Activated CD4-positive, alpha-beta T cell treated with anti-CD3 and anti-CD28 coated beads for 36 hours (primary cell): ENCODE measurements at regions of chr19 and their contacts with region 1.

Region 1: GRCh38 chr19:10653715-10654492 is at the start of gene ILF3:
- DNase-seq: peak; percentile 100
- ATAC-seq: peak; percentile 82
- H3K4me3 Mint-ChIP-seq: peak within 1 kb of the TSS; percentile 86
- H3K27ac Mint-ChIP-seq: peak within 1 kb of the TSS; percentile 97
- H3K4me1 Mint-ChIP-seq: peaks cover 34% of the 10 kb centered on the region
- H3K27me3 Mint-ChIP-seq: no peaks in the 10 kb centered on the region
- total RNA-seq, gene ILF3: 433 to 570 TPM

Region 2: GRCh38 chr19:10194500-10195289 is 459.2 kb before region 1 on chr19 and contains the start of gene DNMT1:
- CTCF ChIA-PET with region 1: no interaction called
- POLR2A ChIA-PET with region 1: interaction called, 3 read pairs
- intact Hi-C with region 1: loop called in 1 of 2 experiments (anchors 1 kb)
- DNase-seq: peak; percentile 99
- ATAC-seq: peak; percentile 94
- H3K4me3 Mint-ChIP-seq: peak within 1 kb of the TSS; percentile 89
- H3K27ac Mint-ChIP-seq: peak within 1 kb of the TSS; percentile 97
- H3K4me1 Mint-ChIP-seq: peaks cover 49% of the 10 kb centered on the region
- H3K27me3 Mint-ChIP-seq: no peaks in the 10 kb centered on the region
- total RNA-seq, gene DNMT1: 374 to 385 TPM

Region 3: DNA sequence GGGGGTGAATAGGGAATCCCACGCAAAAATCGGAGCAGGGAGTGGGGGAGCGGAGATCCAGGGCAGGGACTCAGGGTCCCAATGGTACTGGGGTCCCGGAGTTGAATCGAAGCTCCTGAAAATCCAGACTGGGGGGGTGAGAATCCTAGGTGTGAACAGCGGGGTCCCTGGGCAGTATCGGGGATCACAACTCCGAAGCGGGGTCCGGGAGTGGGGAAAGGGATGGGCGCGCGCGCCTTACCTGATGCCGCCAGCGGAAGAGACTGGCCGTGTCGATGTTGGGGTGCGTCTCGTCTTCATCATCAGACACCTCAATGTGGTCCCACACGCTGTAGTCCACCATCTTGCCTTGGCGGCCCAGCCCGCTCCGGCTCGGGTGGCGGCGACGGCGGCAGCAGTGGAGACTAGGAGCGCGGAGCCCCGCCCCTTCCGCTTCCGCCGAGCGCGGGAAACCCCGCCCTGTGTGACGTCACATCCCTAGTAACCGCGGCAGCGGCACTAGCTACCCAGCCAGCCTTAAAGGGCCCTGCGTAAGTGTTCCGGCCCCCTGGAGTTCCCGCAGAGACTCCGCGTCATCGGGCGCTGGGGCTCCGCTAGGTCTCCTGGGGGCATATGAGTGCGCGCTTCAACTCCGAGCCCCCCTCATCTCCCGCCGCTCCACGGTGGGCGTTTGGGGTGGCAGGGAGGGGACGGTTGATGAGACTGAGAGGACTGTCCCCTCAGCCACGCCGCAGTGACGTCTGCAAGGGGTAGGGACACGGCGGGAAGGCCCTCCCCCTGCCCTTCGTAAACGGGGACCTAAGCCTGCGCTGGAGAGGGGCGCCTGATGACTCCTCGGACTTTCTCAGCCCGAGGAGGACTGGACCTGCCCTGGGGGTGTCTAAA is 250.5 kb before region 1 on chr19 and contains the start of gene CDC37:
- CTCF ChIA-PET with region 1: no interaction called
- POLR2A ChIA-PET with region 1: no interaction called
- intact Hi-C with region 1: loop called in 1 of 2 experiments (anchors 5 kb)
- DNase-seq: peak; percentile 99
- ATAC-seq: peak; percentile 79
- H3K4me3 Mint-ChIP-seq: peak within 1 kb of the TSS; percentile 94
- H3K27ac Mint-ChIP-seq: peak within 1 kb of the TSS; percentile 87
- H3K4me1 Mint-ChIP-seq: peaks cover 61% of the 10 kb centered on the region
- H3K27me3 Mint-ChIP-seq: no peaks in the 10 kb centered on the region
- total RNA-seq, gene CDC37: 178 to 190 TPM

Region 4: DNA sequence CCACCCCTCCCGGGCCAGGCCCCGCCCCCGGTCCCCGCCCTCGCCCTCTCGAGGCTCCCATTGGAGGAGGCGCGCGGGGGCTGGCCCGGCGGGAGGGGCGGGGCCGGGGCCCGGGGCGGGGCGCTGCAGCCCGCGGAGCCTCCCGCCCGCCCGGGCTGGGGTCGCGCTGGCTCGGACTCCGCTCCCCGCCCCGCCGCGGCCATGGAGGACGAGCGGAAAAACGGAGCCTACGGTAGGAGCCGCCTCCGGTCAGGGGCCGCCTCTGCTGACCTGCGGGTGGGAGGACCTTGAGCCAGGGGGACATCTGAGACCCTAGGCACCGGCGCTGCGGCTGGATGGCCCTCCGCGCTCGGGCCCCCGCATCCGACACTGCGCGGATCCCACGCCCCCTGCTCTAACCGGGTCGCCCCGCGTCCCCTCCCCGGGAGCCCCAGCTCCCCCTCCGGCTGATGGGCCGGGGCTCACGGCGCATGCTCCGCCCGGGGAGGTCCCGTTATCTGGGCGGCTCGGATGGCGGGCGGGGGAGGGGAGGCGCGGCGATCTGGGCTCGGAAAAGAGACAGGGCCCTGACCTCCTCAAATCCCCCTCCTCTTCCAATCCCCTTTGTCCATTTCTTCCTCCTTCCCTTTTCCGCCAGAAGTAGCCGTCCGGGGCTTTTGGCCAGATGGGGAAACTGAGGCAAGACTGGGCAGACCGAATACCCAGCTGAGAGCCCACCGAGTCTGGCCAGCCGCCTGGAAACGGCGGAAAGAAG is 51.4 kb before region 1 on chr19:
- CTCF ChIA-PET with region 1: no interaction called
- POLR2A ChIA-PET with region 1: no interaction called
- intact Hi-C with region 1: loop called (anchors 1 to 2 kb)
- DNase-seq: peak; percentile 95
- ATAC-seq: peak; percentile 84
- H3K4me3 Mint-ChIP-seq: peak overlapping the region; percentile 95
- H3K27ac Mint-ChIP-seq: peak overlapping the region; percentile 99
- H3K4me1 Mint-ChIP-seq: peaks cover 24% of the 10 kb centered on the region
- H3K27me3 Mint-ChIP-seq: no peaks in the 10 kb centered on the region

Region 5: GRCh38 chr19:10797541-10798256 is 143.8 kb after region 1 on chr19:
- CTCF ChIA-PET with region 1: no interaction called
- POLR2A ChIA-PET with region 1: no interaction called
- intact Hi-C with region 1: loop called in 1 of 2 experiments (anchors 1 kb)
- DNase-seq: peak; percentile 95
- ATAC-seq: peak; percentile 94
- H3K4me3 Mint-ChIP-seq: peak overlapping the region; percentile 68
- H3K27ac Mint-ChIP-seq: peak overlapping the region; percentile 97
- H3K4me1 Mint-ChIP-seq: peaks cover 36% of the 10 kb centered on the region
- H3K27me3 Mint-ChIP-seq: no peaks in the 10 kb centered on the region

Region 6: DNA sequence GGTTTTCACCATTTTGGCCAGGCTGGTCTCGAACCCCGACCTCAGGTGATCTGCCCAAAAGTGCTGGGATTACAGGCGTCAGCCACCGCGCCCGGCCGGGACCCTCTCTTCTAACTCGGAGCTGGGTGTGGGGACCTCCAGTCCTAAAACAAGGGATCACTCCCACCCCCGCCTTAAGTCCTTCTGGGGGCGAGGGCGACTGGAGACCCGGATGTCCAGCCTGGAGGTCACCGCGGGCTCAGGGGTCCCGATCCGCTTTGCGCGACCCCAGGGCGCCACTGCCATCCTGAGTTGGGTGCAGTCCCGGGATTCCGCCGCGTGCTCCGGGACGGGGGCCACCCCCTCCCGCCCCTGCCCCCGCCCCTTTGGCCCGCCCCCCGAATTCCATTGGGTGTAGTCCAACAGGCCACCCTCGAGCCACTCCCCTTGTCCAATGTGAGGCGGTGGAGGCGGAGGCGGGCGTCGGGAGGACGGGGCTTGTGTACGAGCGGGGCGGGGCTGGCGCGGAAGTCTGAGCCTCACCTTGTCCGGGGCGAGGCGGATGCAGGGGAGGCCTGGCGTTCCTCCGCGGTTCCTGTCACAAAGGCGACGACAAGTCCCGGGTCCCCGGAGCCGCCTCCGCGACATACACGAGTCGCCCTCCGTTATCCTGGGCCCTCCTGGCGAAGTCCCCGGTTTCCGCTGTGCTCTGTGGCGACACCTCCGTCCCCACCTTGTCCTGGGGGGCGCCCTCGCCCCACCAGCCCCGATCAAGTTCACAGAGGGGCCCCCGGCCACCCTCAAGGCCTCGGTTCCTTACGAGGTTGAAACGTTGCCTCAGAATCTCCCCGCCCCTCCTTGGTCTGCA is 436.4 kb after region 1 on chr19:
- CTCF ChIA-PET with region 1: no interaction called
- POLR2A ChIA-PET with region 1: interaction called, 3 read pairs
- intact Hi-C with region 1: loop called in 1 of 2 experiments (anchors 2 kb)
- DNase-seq: peak; percentile 99
- ATAC-seq: peak; percentile 88
- H3K4me3 Mint-ChIP-seq: peak overlapping the region; percentile 93
- H3K27ac Mint-ChIP-seq: peak overlapping the region; percentile 97
- H3K4me1 Mint-ChIP-seq: peaks cover 51% of the 10 kb centered on the region
- H3K27me3 Mint-ChIP-seq: no peaks in the 10 kb centered on the region

Region 7: GRCh38 chr19:11355160-11356073 is 701.5 kb after region 1 on chr19 and contains the start of gene PLPPR2:
- CTCF ChIA-PET with region 1: no interaction called
- POLR2A ChIA-PET with region 1: no interaction called
- intact Hi-C with region 1: no loop called
- DNase-seq: peak; percentile 92
- ATAC-seq: peak; percentile 95
- H3K4me3 Mint-ChIP-seq: peak within 1 kb of the TSS; percentile 43
- H3K27ac Mint-ChIP-seq: peak within 1 kb of the TSS; percentile 23
- H3K4me1 Mint-ChIP-seq: peaks cover 7% of the 10 kb centered on the region
- H3K27me3 Mint-ChIP-seq: peaks cover 13% of the 10 kb centered on the region
- total RNA-seq, gene PLPPR2: 2.1 to 2.2 TPM